Dorsolateral prefrontal cortex (tissue), 120 donors: ENCODE measurements at regions of chr6 and their contacts with region 1.

Region 1: DNA sequence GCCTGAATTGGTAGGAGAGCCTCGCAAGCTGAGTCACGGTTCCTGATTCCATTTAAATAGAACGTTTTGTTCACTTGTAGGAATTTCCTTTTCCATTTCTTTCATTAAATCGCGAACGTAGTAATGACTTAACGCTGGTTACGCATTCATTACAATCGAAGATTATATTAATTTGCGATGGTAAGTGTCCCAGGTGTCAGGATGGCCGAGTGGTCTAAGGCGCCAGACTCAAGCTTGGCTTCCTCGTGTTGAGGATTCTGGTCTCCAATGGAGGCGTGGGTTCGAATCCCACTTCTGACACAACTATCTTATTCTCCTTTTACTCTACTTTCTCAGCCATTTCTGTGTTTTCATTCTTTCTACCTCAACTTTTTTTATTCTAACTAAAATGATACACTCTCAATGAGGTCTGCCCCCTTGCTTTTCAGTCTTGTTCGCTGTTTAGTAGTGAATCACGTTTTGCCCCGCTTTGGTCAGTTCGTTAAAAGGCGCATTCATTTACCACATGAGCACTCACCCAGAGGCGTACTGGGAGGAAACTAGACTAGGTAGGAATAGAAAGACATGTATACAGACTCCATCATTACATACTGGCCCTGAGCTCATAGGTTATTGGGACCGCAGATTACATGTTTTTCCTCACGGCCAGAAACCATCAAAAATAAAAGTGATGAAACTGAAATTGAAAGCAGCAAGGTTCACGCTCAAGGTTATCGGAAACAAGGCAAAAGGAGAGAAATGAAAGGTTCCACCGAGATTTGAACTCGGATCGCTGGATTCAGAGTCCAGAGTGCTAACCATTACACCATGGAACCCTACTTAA is 17.3 kb upstream of the TRIM27 start:
- DNase-seq: peak in 8 of 10 donors; percentile 57 to 79 (median 70)
- H3K4me3 ChIP-seq: peak overlapping the region; percentile 41 to 89 (median 72)
- H3K27ac ChIP-seq: peak overlapping the region; percentile 12 to 94 (median 80)
- H3K27me3 ChIP-seq: no peaks in the 10 kb centered on the region
- CTCF ChIP-seq: peak in 7 of 56 donors; percentile 4 to 33 (median 10)

Region 2: GRCh38 chr6:28863604-28864320 is 77.3 kb before region 1 on chr6:
- intact Hi-C with region 1: loop called in 1 of 2 experiments (anchors 2 kb)
- DNase-seq: peak; percentile 67 to 87 (median 79)
- H3K4me3 ChIP-seq: peak overlapping the region; percentile 52 to 97 (median 82)
- H3K27ac ChIP-seq: peak overlapping the region in 56 of 59 donors; percentile 1 to 92 (median 74)
- H3K27me3 ChIP-seq: no peaks in the 10 kb centered on the region
- CTCF ChIP-seq: peak in 17 of 56 donors; percentile 2 to 40 (median 16)

Region 3: DNA sequence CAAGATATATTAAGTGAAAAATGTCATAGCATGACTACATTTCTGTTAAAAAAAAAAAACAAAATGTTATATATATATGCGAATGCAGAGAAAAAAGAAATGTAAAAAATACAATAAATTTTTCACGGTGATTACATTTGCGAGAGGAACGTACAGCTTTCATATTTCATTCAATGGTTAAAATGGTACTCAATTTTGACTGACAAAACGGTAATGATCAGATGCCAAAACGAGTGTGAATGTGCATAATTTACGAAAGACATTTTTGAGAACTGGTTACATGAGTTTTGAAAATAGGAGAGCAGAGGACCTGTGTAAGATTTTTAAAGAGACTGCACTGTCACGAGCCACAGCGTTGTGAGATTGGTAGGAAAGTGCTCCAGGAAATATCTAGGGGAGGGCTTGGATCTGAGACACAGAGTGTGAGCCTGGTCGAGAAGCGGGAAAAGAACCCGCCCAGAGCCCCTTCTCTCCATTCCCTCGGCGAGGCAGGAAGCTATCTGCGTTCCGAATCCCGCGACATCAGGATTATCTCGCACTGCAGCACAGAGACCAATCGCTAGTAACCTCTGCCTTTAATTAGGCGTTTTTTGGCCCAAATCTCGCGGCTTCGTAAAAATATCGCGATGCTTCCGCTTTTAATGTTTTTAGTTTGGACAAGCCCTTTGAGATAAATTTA is 45.8 kb before region 1 on chr6:
- intact Hi-C with region 1: loop called (anchors 5 kb)
- DNase-seq: peak; percentile 58 to 96 (median 86)
- H3K4me3 ChIP-seq: peak overlapping the region; percentile 50 to 97 (median 81)
- H3K27ac ChIP-seq: peak overlapping the region; percentile 92 to 100 (median 98)
- H3K27me3 ChIP-seq: no peaks in the 10 kb centered on the region
- CTCF ChIP-seq: peak in 9 of 56 donors; percentile 5 to 28 (median 16)

Region 4: GRCh38 chr6:28981833-28982475 is 40.9 kb after region 1 on chr6:
- intact Hi-C with region 1: loop called (anchors 1 to 2 kb)
- DNase-seq: peak; percentile 38 to 82 (median 66)
- H3K4me3 ChIP-seq: peak overlapping the region; percentile 49 to 98 (median 81)
- H3K27ac ChIP-seq: peak overlapping the region; percentile 5 to 96 (median 86)
- H3K27me3 ChIP-seq: no peaks in the 10 kb centered on the region
- CTCF ChIP-seq: peak in 26 of 56 donors; percentile 1 to 60 (median 19)